Head of caudate nucleus (tissue), 42 donors: ENCODE measurements at regions of chr22 and their contacts with region 1.

Region 1: GRCh38 chr22:41237707-41238569 is 2.8 kb downstream of the CHADL start:
- DNase-seq: peak in 41 of 42 donors; percentile 38 to 87 (median 71)

Region 2: DNA sequence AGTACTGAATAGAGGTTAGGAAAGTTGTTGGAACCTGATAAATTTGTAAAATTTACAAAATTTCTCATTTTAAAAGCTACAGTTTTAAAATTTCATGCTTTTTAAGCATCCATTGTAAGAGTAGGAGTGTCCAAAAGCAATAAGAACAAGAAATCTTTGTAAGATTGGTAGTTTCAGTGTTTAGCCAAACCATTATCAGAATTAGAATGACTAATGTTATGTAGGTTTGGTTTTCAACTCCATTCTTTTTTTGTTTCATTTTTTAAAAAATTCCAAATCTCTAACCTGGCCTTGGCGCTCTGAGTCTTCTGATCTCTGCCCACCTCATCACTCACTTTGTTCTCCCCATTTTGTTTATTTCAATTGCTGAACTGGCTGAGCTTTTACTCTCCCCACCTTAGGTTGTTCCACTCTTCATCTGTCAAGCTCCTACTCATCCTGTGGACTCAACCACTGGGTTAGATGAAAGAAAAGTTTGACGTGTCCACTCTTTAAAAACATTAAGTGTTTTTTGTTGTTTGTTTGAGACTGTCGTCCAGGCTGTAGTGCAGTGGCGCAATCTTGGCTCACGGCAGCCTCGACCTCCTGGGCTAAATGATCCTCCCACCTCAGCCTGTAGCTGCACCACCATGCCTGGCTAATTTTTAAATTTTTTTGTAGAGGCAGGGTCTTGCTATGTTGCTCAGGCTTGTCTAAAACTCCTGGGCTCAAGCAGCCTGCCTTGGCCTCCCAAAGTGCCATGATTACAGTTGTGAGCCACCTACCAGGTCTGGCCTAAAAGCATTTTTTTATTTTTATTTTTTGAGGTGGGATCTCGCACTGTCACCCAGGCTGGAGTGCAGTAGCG is 131.6 kb before region 1 on chr22:
- intact Hi-C with region 1: no loop called
- DNase-seq: no peak

Region 3: DNA sequence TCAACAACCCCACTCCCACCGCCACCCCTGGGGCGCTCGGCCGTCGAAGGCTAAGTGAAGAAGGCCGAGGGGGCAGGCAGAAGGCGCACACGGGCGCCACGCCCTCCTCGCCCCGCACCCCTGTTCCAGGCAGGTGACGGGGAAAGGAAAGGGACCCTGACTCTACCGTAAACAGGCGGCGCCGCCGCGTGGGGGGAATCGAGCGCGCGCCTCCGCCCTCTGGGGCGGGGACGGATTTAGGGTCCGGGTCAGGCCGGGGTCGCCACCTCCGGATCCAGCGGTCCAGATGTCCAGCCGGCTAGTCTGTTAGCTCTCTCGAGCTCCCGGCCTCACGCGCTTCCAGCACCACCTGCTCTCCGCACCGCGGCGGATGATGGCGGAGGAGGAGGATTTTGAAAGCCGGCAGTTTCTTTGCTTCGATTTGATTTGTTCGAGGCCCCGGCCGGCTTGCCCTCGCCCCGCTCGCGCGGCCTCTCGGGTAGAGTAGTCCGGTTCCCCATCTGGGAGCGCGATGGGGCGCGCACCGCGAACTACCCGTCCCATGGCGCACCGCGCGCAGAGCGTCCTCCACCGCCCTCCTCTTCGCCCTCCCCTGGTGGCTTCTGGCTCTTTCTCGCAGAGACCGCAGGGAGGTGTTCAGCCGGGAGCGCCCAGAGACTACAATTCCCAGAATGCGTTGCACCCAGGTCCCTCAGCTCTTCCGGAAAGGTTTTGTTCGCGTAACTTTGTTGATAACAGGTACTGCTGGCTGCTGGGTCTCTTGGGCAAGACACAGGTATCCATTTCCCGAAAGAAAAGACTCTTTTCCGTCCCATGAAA is 48.1 kb after region 1 on chr22 and contains the start of gene RANGAP1:
- intact Hi-C with region 1: loop called (anchors 10 kb)
- DNase-seq: peak; percentile 97 to 100 (median 99)